Caco-2 (cell line): ENCODE measurements at regions of chr2 and their contacts with region 1.

Region 1: GRCh38 chr2:127100251-127101047 is 6.5 kb downstream of the BIN1 start:
- DNase-seq: peak; percentile 89 to 91
- H3K4me3 ChIP-seq: no peak overlapping the region
- H3K4me3 Mint-ChIP-seq: peak overlapping the region; percentile 68
- H3K27ac Mint-ChIP-seq: peak overlapping the region; percentile 94
- H3K4me1 ChIP-seq: peaks cover 85% of the 10 kb centered on the region
- H3K4me1 Mint-ChIP-seq: peaks cover 67% of the 10 kb centered on the region
- H3K27me3 ChIP-seq: no peaks in the 10 kb centered on the region
- H3K27me3 Mint-ChIP-seq: no peaks in the 10 kb centered on the region
- CTCF ChIP-seq: peak in 1 of 2 experiments; percentile 7

Region 2: GRCh38 chr2:127083819-127084503 is 16.5 kb before region 1 on chr2:
- CTCF ChIA-PET with region 1: interaction called, 6 read pairs
- POLR2A ChIA-PET with region 1: interaction called, 6 read pairs
- intact Hi-C with region 1: loop called (anchors 1 kb)
- DNase-seq: no peak
- H3K4me3 ChIP-seq: no peak overlapping the region
- H3K4me3 Mint-ChIP-seq: no peak overlapping the region
- H3K27ac Mint-ChIP-seq: peak overlapping the region; percentile 93
- H3K4me1 ChIP-seq: peaks cover 83% of the 10 kb centered on the region
- H3K4me1 Mint-ChIP-seq: peaks cover 43% of the 10 kb centered on the region
- H3K27me3 ChIP-seq: no peaks in the 10 kb centered on the region
- H3K27me3 Mint-ChIP-seq: no peaks in the 10 kb centered on the region
- CTCF ChIP-seq: no peak

Region 3: GRCh38 chr2:127115471-127116065 is 15.1 kb after region 1 on chr2:
- CTCF ChIA-PET with region 1: interaction called, 3 read pairs
- POLR2A ChIA-PET with region 1: interaction called, 10 read pairs
- intact Hi-C with region 1: loop called (anchors 1 kb)
- DNase-seq: peak; percentile 89 to 95
- H3K4me3 ChIP-seq: peak overlapping the region; percentile 29; the same call in 1 of the 2 replicates
- H3K4me3 Mint-ChIP-seq: peak overlapping the region; percentile 65
- H3K27ac Mint-ChIP-seq: peak overlapping the region; percentile 60
- H3K4me1 ChIP-seq: peaks cover 54% of the 10 kb centered on the region
- H3K4me1 Mint-ChIP-seq: peaks cover 32% of the 10 kb centered on the region
- H3K27me3 ChIP-seq: no peaks in the 10 kb centered on the region
- H3K27me3 Mint-ChIP-seq: no peaks in the 10 kb centered on the region
- CTCF ChIP-seq: no peak

Region 4: DNA sequence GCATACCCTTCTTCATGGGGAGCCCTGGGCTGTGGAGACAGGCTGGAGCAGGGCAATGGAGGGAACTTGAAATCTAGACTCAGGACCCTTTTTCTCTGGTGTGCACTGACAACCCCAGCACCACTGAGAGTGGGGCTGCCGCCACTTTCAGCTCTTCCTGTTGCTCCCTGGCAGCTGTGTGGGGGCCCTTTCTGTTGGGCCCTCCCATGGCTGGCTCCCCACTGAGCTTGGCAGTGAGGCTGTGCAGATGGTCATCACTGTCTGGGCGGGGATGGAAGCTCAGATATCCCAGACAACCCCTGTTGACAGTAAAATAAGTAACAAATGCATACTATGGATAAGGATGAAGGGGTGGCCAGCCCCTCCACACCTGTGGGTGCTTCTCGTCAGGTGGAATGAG is 441.8 kb after region 1 on chr2:
- CTCF ChIA-PET with region 1: no interaction called
- POLR2A ChIA-PET with region 1: no interaction called
- intact Hi-C with region 1: no loop called
- DNase-seq: no peak
- H3K4me3 ChIP-seq: no peak overlapping the region
- H3K4me3 Mint-ChIP-seq: peak overlapping the region; percentile 47
- H3K27ac Mint-ChIP-seq: peak overlapping the region; percentile 49
- H3K4me1 ChIP-seq: peaks cover 28% of the 10 kb centered on the region
- H3K4me1 Mint-ChIP-seq: peaks cover 15% of the 10 kb centered on the region
- H3K27me3 ChIP-seq: no peaks in the 10 kb centered on the region
- H3K27me3 Mint-ChIP-seq: peaks cover 3% of the 10 kb centered on the region
- CTCF ChIP-seq: no peak